Mucosa of descending colon (tissue), 3 donors: ENCODE measurements at regions of chr11 and their contacts with region 1.

Region 1: GRCh38 chr11:86938900-86939880 is 16.0 kb downstream of the FZD4 start:
- DNase-seq: peak in 1 of 3 donors; percentile 51
- ATAC-seq: peak; percentile 67
- H3K4me3 ChIP-seq: no peak overlapping the region
- H3K4me1 ChIP-seq: no peaks in the 10 kb centered on the region
- CTCF ChIP-seq: peak; percentile 41

Region 2: DNA sequence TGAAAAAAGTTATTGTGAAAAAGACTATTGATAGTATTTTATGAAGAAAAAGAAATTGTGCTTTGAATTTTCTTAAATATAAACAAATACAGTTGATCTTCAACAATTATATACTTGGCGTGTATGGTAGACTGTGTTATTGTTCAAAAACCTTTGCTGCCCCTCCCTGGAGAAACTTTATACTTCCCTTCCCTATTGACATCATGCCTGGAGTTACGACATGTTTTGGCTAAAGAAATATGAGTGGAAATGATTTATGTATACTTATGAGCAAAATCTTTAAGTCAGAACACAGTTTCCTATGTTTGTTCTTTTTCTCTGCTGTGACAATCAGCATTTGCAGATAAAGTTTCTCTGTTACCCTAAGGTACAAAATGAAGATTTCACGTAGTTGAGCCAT is 342.3 kb after region 1 on chr11:
- intact Hi-C with region 1: loop called in 1 of 2 experiments (anchors 5 kb)
- DNase-seq: no peak
- ATAC-seq: no peak
- H3K4me3 ChIP-seq: no peak overlapping the region
- H3K4me1 ChIP-seq: no peaks in the 10 kb centered on the region
- CTCF ChIP-seq: no peak

Region 3: DNA sequence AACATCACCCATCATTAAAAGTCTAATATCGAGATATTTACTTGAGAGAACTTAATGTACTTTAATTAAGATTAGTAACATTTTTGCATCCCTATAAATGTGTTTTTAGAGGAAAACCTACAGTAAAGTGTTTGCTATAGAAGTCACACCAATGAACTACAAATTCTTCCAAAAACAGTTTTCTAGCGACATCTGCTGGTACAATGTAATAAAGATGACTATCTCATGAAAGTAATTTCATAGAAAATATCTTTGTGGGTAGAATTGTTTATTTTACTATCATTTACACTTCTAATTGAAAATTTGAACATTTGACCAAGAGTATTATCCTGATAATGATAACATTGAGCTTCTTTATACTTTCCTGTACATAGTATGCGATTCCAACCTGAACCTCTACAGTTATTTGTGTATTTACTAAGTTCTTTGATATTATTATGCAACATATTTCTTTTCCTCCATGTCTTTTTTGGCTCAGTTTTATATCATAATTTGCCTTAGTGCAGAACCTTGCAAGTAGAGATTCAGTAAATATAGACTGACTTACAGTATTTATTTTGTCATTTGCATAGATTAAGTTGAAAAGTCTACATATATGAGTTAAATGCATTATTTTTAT is 351.2 kb after region 1 on chr11:
- intact Hi-C with region 1: loop called in 1 of 2 experiments (anchors 5 kb)
- DNase-seq: no peak
- ATAC-seq: peak; percentile 40
- H3K4me3 ChIP-seq: no peak overlapping the region
- H3K4me1 ChIP-seq: no peaks in the 10 kb centered on the region
- CTCF ChIP-seq: no peak